HEK293 (cell line): ENCODE measurements at regions of chr19 and their contacts with region 1.

Region 1: GRCh38 chr19:16516923-16517610 is 20.9 kb downstream of the C19orf44 start:
- H3K4me3 ChIP-seq: no peak overlapping the region
- H3K27ac ChIP-seq: no peak overlapping the region
- H3K4me1 ChIP-seq: no peaks in the 10 kb centered on the region
- CTCF ChIP-seq: no peak

Region 2: DNA sequence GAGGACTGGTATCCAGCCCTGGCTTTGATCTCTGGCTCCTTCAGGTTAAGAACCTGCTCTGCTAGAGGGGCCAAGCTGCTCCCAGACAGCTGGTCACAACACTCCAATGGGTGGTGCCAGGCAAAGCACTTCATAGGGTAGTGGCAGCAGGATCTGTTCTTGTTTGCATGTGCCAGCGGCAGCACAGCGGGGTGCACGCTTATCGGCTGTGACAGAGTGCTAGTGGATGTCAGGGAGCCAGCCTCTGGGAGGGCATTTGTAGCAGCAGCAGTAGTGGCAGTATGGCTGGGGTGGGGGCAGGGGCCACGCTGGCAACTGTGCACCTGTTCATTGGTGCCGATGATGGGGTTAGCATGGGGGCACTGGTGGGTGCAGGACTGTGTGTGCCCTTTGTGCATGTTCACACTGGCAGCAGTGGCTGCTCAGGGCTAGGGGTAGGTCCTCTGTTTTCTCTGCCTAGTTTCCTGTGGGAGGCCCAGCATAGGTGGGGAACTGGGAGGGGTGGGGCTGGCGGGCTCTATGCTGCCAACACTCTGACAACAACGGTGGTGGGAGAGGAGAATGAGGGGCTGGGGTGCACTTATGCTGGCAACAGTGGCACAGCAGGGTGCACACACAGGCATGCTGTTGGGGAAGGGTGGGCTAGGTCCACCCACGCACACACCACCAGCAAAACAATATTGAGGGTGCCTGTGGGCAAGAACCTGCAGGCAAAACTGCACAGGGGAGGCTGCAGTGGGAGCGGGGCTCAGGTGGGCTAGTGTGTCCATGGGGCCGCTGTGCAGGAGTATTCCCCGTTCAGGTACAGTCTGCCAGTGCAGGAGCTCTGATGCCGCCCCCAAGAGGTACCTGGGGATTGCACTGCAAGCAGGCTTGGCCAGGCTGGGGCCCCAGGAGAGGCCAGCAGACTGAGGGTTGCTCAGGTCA is 300.1 kb before region 1 on chr19:
- CTCF ChIA-PET with region 1: no interaction called
- POLR2A ChIA-PET with region 1: no interaction called
- H3K4me3 ChIP-seq: no peak overlapping the region
- H3K27ac ChIP-seq: no peak overlapping the region
- H3K4me1 ChIP-seq: no peaks in the 10 kb centered on the region
- CTCF ChIP-seq: no peak

Region 3: DNA sequence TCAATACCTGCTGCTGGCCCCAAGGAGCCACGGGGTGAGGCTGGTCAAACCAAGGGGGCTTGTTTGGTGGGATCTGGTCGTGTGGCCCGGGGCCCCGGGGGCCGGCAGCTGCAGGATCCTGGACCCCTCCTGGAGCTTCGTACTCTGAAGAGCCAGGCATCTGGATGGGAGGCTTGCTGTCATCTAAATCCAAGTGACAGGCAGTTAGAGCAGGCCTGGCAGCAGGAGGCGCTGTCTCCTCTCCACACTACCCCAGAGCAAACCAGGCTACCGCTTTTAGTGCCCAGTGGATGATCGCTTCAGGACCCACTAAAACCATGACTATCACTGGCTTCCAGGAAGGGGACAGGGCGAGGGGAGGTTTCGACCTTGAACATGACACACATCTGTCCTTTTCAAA is 11.0 kb after region 1 on chr19:
- CTCF ChIA-PET with region 1: interaction called, 10 read pairs
- POLR2A ChIA-PET with region 1: no interaction called
- H3K4me3 ChIP-seq: no peak overlapping the region
- H3K27ac ChIP-seq: no peak overlapping the region
- H3K4me1 ChIP-seq: no peaks in the 10 kb centered on the region
- CTCF ChIP-seq: 0 out of 2 replicates have a peak, but pooled peaks have one; percentile 16

Region 4: DNA sequence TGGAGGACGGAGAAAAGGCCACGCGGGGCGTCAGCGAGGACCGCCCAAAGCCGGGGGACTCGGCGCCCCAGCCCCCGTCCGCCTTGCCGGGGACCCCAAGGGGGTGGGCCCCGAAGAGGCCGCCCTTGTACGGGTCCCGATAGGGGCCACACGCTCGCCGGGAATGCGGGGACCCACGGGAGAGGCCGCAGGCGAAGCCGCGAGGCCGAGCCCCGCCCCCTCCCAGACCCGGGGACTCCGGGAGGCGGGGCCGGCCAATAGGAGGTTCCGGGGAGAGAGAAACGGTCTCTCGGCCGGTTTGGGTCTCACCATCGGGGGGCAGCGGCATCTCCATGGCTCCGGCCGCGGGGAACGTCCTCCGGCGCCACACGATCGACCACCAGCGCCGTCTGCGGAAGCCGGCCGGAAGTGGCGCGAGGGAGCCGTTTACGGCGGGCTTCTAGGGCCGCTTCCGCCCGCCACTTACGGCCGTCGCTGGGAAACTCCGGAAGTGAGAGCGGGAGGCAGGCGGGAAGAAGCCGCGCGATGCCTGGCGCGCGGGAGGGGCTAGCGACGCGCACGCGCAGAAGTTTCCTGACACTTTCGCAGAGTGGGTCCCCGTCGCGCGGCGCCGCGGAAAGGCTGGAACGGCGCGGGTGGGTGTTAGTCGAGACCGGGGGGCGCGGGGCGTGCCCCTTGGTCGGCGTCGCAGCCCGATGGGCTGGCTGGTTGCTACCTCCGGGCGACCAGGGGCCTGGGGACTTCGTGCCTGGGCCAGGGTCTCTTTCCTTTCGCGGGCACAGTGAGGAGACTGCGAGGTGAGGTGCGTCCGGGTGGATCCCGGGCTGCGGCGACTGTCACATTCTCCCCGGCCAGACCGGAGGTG is 25.2 kb after region 1 on chr19 and contains the start of gene CHERP:
- CTCF ChIA-PET with region 1: no interaction called
- POLR2A ChIA-PET with region 1: no interaction called
- H3K4me3 ChIP-seq: peak within 1 kb of the TSS; percentile 96
- H3K27ac ChIP-seq: peak within 1 kb of the TSS; percentile 78
- H3K4me1 ChIP-seq: peaks cover 2% of the 10 kb centered on the region; the same call in 1 of the 2 replicates
- CTCF ChIP-seq: peak; percentile 17; the same call in 1 of the 2 replicates